AG04449 (cell line): ENCODE measurements at regions of chr20 and their contacts with region 1.

Region 1: DNA sequence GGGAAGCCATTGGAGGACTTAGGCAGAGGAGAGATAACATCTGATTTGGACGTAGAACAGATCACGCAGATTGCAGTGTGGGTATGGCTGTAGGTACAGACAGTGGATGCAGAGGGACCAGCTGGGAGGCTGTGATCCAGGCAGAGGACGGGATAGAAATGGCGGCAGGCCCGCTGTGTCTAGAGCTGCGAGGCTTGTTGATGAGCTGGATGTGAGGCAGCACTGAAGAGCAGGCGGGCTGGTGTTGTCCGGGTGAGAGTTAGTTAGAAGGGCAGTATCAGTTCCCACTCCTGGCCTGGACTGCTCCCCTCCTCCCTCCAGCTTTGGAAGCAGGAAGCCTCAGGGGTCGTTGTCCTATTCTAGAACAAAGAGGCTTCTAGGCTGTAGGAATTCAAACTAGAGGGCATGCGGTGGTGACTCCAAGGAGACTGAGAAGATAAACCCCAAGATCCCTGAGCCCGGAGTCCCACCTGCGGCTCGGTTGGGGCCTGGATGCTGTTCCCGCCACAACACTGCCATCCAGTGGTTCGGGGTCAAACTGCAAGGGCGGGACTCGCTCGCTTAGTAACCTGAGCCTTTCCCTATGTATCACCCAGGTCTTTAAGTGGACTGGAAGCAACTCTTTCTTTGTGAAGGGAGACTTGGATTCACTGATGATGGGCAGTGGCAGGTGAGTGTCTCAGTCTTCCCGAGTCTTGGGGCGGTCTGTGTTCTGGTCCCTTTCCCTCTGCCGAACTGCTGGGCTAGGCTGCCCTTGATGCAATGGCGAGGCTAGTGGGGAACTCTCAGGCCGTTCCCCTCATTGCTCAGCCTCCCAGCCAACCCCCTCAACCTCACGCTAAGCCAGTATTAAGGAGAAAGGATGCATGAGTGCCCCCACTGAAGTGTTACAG is 11.2 kb downstream of the TLDC2 start:
- DNase-seq: no peak
- H3K4me3 ChIP-seq: peak overlapping the region; percentile 43
- CTCF ChIP-seq: peak; percentile 94

Region 2: GRCh38 chr20:36645998-36646397 is 241.1 kb before region 1 on chr20 and contains the start of gene SLA2:
- CTCF ChIA-PET with region 1: no interaction called
- POLR2A ChIA-PET with region 1: no interaction called
- DNase-seq: no peak
- H3K4me3 ChIP-seq: no peak within 1 kb of the TSS
- CTCF ChIP-seq: no peak

Region 3: DNA sequence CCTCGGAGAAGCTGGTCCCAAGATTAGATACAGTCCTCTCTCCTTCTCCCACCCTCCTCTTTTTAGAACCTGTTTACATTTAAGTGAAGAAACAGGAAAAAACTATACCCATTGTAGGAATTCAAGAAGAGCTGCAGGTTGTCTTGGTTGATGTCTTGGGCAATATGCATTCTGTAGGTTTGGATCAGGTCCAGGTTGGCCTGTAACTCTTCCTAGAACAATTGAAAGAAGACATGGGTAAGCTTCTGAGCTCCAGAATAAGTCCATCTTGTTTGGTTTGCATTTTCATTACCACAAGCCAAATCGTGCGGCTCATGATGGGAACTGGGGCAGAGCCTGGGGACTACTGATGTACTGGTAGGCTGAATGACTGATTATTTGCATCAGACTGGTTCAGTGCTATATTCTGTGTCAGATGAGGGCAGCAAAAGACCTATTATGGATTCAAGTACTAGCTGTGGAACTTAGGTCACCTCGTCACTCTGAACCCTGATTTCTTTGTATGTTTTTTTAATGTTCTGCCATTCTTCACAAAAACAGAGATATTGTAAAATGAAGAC is 220.8 kb before region 1 on chr20:
- CTCF ChIA-PET with region 1: interaction called, 10 read pairs
- POLR2A ChIA-PET with region 1: no interaction called
- DNase-seq: peak; percentile 16
- H3K4me3 ChIP-seq: no peak overlapping the region
- CTCF ChIP-seq: no peak

Region 4: DNA sequence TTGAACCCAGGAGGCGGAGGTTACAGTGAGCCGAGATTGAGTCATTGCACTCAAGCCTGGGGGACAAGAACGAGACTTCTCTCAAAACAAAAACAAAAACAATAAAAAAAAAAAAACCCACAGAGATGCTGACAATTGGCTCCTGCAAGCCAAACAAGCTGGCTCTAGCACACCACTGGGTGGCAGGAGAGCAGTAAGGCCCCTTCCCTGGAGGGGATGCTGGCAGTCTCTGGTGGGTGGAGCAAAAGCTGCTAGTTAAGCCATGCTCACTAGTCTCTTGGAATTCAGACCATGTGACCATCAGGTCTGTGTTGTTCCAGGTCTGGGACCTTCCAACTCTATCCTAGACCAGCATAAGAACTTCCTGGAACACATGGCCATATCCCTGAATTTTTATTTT is 94.7 kb before region 1 on chr20:
- CTCF ChIA-PET with region 1: interaction called, 13 read pairs
- POLR2A ChIA-PET with region 1: no interaction called
- DNase-seq: no peak
- H3K4me3 ChIP-seq: no peak overlapping the region
- CTCF ChIP-seq: peak; percentile 67

Region 5: GRCh38 chr20:36872852-36873251 is 14.3 kb before region 1 on chr20:
- CTCF ChIA-PET with region 1: interaction called, 24 read pairs
- POLR2A ChIA-PET with region 1: no interaction called
- DNase-seq: no peak
- H3K4me3 ChIP-seq: no peak overlapping the region
- CTCF ChIP-seq: no peak

Region 6: DNA sequence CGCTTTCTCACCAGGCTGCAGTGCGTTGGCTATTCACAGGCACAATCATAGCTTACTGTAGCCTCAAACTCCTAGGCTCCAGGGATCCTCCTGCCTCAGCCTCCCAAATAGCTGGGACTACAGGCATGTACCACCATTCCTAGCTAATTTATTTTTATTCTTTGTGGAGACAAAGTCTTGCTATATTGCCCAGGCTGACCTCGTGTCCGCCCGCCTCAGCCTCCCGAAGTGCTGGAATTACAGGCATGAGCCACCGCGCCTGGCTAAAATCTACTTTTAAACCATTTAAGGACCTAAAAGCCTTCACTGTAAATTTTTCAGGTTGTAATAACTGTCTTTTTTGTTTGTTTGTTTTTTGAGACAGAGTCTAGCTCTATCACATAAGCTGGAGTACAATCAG is 49.2 kb after region 1 on chr20:
- CTCF ChIA-PET with region 1: no interaction called
- POLR2A ChIA-PET with region 1: no interaction called
- DNase-seq: no peak
- H3K4me3 ChIP-seq: no peak overlapping the region
- CTCF ChIP-seq: no peak

Region 7: GRCh38 chr20:36998652-36999051 is 111.5 kb after region 1 on chr20:
- CTCF ChIA-PET with region 1: no interaction called
- POLR2A ChIA-PET with region 1: no interaction called
- DNase-seq: no peak
- H3K4me3 ChIP-seq: no peak overlapping the region
- CTCF ChIP-seq: no peak